ENCODE measurements at regions of chr6 and their contacts with region 1.

Region 1: GRCh38 chr6:134097114-134097707 is 44.8 kb upstream of the SLC2A12 start:
- DNase-seq: no peak
- H3K4me3 ChIP-seq: no peak overlapping the region
- CTCF ChIP-seq: peak; percentile 30

Region 2: GRCh38 chr6:133568970-133569889 is 528.0 kb before region 1 on chr6:
- CTCF ChIA-PET with region 1: interaction called, 23 read pairs
- POLR2A ChIA-PET with region 1: no interaction called
- DNase-seq: peak; percentile 50
- H3K4me3 ChIP-seq: peak overlapping the region; percentile 46
- CTCF ChIP-seq: peak; percentile 76

Region 3: GRCh38 chr6:133916650-133917151 is 180.5 kb before region 1 on chr6:
- CTCF ChIA-PET with region 1: interaction called, 1,249 read pairs
- POLR2A ChIA-PET with region 1: no interaction called
- DNase-seq: peak; percentile 71
- H3K4me3 ChIP-seq: no peak overlapping the region
- CTCF ChIP-seq: peak; percentile 91

Region 4: GRCh38 chr6:133945158-133945557 is 152.1 kb before region 1 on chr6:
- CTCF ChIA-PET with region 1: interaction called, 38 read pairs
- POLR2A ChIA-PET with region 1: interaction called, 8 read pairs
- DNase-seq: no peak
- H3K4me3 ChIP-seq: no peak overlapping the region
- CTCF ChIP-seq: no peak

Region 5: GRCh38 chr6:133966654-133967329 is 130.4 kb before region 1 on chr6:
- CTCF ChIA-PET with region 1: interaction called, 22 read pairs
- POLR2A ChIA-PET with region 1: no interaction called
- DNase-seq: no peak
- H3K4me3 ChIP-seq: no peak overlapping the region
- CTCF ChIP-seq: no peak

Region 6: DNA sequence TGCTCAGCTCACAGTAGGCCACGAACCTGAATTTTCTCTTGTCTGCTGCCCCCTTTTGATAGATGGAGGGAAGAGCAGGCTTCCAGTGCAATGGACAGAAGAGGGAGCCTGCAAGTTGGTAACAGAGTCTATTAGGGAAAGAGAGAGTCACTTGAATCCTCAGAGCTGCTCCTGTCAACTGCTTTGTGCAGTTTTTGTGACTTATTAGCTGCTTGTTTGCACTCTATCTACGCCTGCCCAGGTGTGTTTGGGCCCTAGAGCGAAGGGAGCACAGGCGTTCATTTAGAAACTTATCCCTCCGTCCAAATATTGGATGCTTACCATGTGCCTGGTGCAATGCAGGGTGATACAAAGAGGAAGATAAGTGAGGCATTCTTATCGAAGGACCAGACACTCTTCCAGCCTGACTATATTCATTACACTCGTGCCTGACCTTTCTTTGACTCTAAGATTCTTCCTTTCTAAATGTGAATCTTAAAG is 33.2 kb before region 1 on chr6:
- CTCF ChIA-PET with region 1: interaction called, 100 read pairs
- POLR2A ChIA-PET with region 1: no interaction called
- DNase-seq: peak; percentile 47
- H3K4me3 ChIP-seq: no peak overlapping the region
- CTCF ChIP-seq: peak; percentile 93

Region 7: GRCh38 chr6:134111062-134111677 is 14.0 kb after region 1 on chr6:
- CTCF ChIA-PET with region 1: interaction called, 35 read pairs
- POLR2A ChIA-PET with region 1: no interaction called
- DNase-seq: no peak
- H3K4me3 ChIP-seq: no peak overlapping the region
- CTCF ChIP-seq: peak; percentile 69

Region 8: GRCh38 chr6:134211297-134211696 is 114.1 kb after region 1 on chr6:
- CTCF ChIA-PET with region 1: no interaction called
- POLR2A ChIA-PET with region 1: no interaction called
- DNase-seq: no peak
- H3K4me3 ChIP-seq: no peak overlapping the region
- CTCF ChIP-seq: no peak

Measured in AG04449 (cell line).